ENCODE measurements at regions of chr10 and their contacts with region 1.

Region 1: DNA sequence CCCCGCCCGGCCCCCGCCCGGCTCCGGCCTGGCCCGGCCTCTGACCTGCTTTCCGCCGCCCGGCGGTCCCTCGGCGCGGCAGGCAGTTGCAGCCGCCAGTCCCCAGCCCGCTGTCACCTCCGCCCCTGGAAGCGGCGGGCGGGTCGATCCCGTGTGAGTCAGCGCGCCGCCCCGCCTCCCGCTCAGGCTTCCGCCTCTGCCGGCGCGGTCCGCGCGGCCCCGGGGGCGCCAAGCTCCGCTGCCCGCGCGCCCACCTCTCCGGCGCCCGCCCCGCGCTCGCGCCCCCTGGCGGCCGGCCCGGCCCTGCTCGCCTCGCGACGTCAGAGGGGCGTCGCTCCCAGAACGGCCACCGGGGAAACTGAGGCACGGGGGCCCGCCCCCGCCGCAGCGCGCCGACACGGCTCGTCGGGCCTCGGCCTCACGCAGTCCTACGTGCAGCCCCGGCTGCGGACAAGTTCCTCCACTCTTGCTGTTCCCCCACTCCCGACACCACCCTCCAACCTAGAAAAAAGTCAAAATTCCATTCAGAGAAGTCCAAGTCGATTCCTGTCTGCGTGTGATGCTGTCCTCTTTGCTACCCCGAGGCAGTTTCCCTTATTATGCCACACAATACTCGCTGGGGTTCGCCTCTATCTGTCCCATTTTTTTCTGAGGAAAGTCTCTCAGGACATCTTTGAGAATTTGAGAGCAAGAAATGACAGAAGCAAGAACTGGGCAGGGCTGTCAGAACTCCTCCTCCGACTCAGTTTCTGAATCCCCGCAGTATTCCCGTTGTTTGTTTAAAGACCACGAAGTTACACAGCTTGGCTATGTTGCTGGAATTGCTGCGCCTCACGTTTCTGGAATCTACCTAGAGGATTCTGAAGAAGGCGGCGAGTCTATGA is at the start of gene DNMBP:
- DNase-seq: no peak
- ATAC-seq: peak; percentile 69
- H3K4me3 ChIP-seq: peak within 1 kb of the TSS; percentile 97
- H3K27ac ChIP-seq: peak within 1 kb of the TSS; percentile 78
- H3K4me1 ChIP-seq: peaks cover 22% of the 10 kb centered on the region
- H3K27me3 ChIP-seq: no peaks in the 10 kb centered on the region
- CTCF ChIP-seq: peak; percentile 40 to 58 (median 53); a peak in 5 of 6 replicates
- EP300 ChIP-seq: no peak
- POLR2A ChIP-seq: peak; percentile 89
- RAD21 ChIP-seq: peak; percentile 65
- polyA plus RNA-seq, gene DNMBP: 7.1 to 9.8 TPM

Region 2: GRCh38 chr10:99976886-99977665 is 33.0 kb before region 1 on chr10:
- CTCF ChIA-PET with region 1: interaction called, 318 read pairs
- POLR2A ChIA-PET with region 1: interaction called, 124 read pairs
- RAD21 ChIA-PET with region 1: interaction called, 255 read pairs
- SMC1A ChIA-PET with region 1: interaction called, 531 read pairs
- in situ Hi-C with region 1: no loop called
- intact Hi-C with region 1: loop called (anchors 1 kb)
- DNase-seq: no peak
- ATAC-seq: no peak; the same call in 1 of the 3 replicates
- H3K4me3 ChIP-seq: no peak overlapping the region
- H3K27ac ChIP-seq: peak overlapping the region; percentile 94
- H3K4me1 ChIP-seq: peaks cover 70% of the 10 kb centered on the region
- H3K27me3 ChIP-seq: no peaks in the 10 kb centered on the region
- CTCF ChIP-seq: no peak
- EP300 ChIP-seq: no peak
- POLR2A ChIP-seq: no peak
- RAD21 ChIP-seq: no peak

Region 3: GRCh38 chr10:99983280-99983988 is 26.6 kb before region 1 on chr10:
- CTCF ChIA-PET with region 1: interaction called, 318 read pairs
- POLR2A ChIA-PET with region 1: interaction called, 124 read pairs
- RAD21 ChIA-PET with region 1: interaction called, 255 read pairs
- SMC1A ChIA-PET with region 1: interaction called, 531 read pairs
- in situ Hi-C with region 1: no loop called
- intact Hi-C with region 1: no loop called
- DNase-seq: peak; percentile 48
- ATAC-seq: peak; percentile 86
- H3K4me3 ChIP-seq: peak overlapping the region; percentile 57; the same call in 1 of the 2 replicates
- H3K27ac ChIP-seq: peak overlapping the region; percentile 90
- H3K4me1 ChIP-seq: peaks cover 63% of the 10 kb centered on the region
- H3K27me3 ChIP-seq: no peaks in the 10 kb centered on the region
- CTCF ChIP-seq: no peak
- EP300 ChIP-seq: no peak
- POLR2A ChIP-seq: 0 out of 2 replicates have a peak, but pooled peaks have one; percentile 25
- RAD21 ChIP-seq: no peak

Region 4: DNA sequence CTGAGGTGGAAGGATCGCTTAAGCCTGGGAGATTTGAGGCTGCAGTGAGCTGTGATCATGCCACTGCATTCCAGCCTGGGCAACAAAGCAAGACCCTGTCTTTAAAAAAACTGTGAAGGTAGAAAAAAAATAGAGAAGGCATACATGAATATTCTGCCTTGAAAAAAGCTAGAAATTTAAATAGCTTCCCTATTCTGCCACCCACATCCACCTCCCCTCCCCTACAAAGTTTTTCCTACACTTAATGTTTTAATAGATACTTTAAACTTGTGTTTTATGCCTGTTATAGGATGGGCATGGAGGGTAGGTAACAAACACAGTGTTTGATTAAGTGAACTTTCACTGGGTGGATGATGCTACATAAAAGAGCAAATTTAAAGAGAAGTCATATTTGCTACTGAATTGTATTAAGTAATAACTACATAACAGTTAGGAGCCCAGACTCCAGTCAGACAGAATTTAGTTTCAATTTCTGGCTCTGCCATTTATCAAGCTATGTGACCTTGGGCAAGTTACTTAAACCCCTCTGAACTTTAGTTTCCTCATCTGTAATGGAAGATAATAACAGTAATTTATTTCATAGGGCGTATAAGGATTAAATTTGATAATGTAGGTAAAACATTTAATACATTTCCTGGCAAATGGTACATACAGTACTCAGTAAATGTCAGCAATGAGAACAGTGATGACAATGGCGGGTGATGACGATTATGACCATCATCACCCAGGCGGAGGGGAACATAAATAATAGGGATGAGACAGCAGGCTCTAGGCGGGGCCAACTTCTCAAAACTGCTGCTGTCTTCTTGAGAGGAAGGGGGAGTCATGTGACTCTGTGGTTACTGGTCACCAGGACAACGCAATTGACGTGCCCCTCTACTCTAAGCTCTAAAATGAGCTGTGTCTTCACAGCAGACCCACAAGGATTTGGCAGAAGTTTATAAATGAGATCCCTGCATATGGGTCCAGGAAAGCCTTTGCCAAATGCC is 16.0 kb before region 1 on chr10:
- CTCF ChIA-PET with region 1: interaction called, 318 read pairs
- POLR2A ChIA-PET with region 1: interaction called, 88 read pairs
- RAD21 ChIA-PET with region 1: interaction called, 49 read pairs
- SMC1A ChIA-PET with region 1: interaction called, 531 read pairs
- in situ Hi-C with region 1: no loop called
- intact Hi-C with region 1: no loop called
- DNase-seq: peak; percentile 51
- ATAC-seq: peak; percentile 98
- H3K4me3 ChIP-seq: peak overlapping the region; percentile 4; the same call in 1 of the 2 replicates
- H3K27ac ChIP-seq: peak overlapping the region; percentile 42
- H3K4me1 ChIP-seq: peaks cover 23% of the 10 kb centered on the region
- H3K27me3 ChIP-seq: no peaks in the 10 kb centered on the region
- CTCF ChIP-seq: no peak
- EP300 ChIP-seq: no peak
- POLR2A ChIP-seq: 0 out of 2 replicates have a peak, but pooled peaks have one; percentile 24
- RAD21 ChIP-seq: no peak

Region 5: GRCh38 chr10:99999319-100000108 is 10.5 kb before region 1 on chr10:
- CTCF ChIA-PET with region 1: interaction called, 116 read pairs
- POLR2A ChIA-PET with region 1: interaction called, 88 read pairs
- RAD21 ChIA-PET with region 1: interaction called, 49 read pairs
- SMC1A ChIA-PET with region 1: interaction called, 92 read pairs
- in situ Hi-C with region 1: no loop called
- intact Hi-C with region 1: no loop called
- DNase-seq: no peak
- ATAC-seq: no peak
- H3K4me3 ChIP-seq: no peak overlapping the region
- H3K27ac ChIP-seq: no peak overlapping the region
- H3K4me1 ChIP-seq: peaks cover 31% of the 10 kb centered on the region
- H3K27me3 ChIP-seq: no peaks in the 10 kb centered on the region
- CTCF ChIP-seq: no peak
- EP300 ChIP-seq: no peak
- POLR2A ChIP-seq: no peak
- RAD21 ChIP-seq: no peak

Region 6: GRCh38 chr10:100020142-100020885 is 10.3 kb after region 1 on chr10:
- CTCF ChIA-PET with region 1: interaction called, 18 read pairs
- POLR2A ChIA-PET with region 1: interaction called, 6 read pairs
- RAD21 ChIA-PET with region 1: interaction called, 11 read pairs
- SMC1A ChIA-PET with region 1: interaction called, 20 read pairs
- in situ Hi-C with region 1: no loop called
- intact Hi-C with region 1: no loop called
- DNase-seq: peak; percentile 87
- ATAC-seq: peak; percentile 92
- H3K4me3 ChIP-seq: peak overlapping the region; percentile 41; the same call in 1 of the 2 replicates
- H3K27ac ChIP-seq: peak overlapping the region; percentile 94
- H3K4me1 ChIP-seq: peaks cover 29% of the 10 kb centered on the region
- H3K27me3 ChIP-seq: no peaks in the 10 kb centered on the region
- CTCF ChIP-seq: peak in 2 of 3 experiments; percentile 28 to 44; a peak in 3 of 6 replicates
- EP300 ChIP-seq: peak in 1 of 2 experiments; percentile 31; a peak in 1 of 4 replicates
- POLR2A ChIP-seq: no peak
- RAD21 ChIP-seq: peak; percentile 56

Region 7: DNA sequence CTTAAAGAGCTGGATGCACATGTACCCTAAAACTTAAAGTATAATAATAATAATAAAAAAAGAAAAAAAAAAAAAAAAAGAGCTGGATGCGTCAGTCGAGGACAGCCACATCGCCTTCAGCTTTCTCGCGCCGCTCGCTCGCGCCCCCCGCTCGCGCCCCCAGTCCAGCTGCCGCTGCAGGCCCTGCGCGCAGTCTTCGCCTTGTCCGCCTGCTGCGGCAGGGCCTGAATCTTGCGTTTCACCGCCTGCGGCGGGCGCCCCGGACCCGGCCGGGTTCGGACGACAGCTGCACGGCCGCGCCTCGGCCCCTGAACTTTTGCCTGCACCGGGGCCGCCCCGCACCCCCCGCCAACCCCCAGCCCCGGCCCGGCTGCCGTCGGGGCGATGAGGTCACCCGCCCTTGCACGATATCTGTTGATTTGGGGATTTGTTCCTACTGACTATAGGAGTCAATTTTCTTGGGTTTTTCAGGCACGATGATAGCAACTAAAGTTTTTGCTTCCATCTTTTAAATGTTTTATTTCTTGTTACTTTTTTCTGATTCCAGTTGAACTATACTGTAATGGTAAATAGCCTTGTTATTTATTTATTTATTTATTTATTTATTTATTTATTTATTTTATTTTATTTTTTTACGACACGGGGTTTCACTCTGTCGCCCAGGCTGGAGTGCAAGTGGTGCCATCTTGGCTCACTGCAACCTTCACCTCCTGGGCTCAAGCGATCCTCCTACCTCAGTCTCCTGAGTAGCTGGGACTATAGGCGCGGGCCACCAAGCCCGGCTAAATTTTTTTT is 105.1 kb after region 1 on chr10:
- CTCF ChIA-PET with region 1: no interaction called
- POLR2A ChIA-PET with region 1: no interaction called
- RAD21 ChIA-PET with region 1: no interaction called
- SMC1A ChIA-PET with region 1: no interaction called
- in situ Hi-C with region 1: no loop called
- intact Hi-C with region 1: no loop called
- DNase-seq: no peak
- ATAC-seq: no peak
- H3K4me3 ChIP-seq: no peak overlapping the region
- H3K27ac ChIP-seq: no peak overlapping the region
- H3K4me1 ChIP-seq: no peaks in the 10 kb centered on the region
- H3K27me3 ChIP-seq: no peaks in the 10 kb centered on the region
- CTCF ChIP-seq: no peak
- EP300 ChIP-seq: no peak
- POLR2A ChIP-seq: no peak
- RAD21 ChIP-seq: no peak

Measured in GM12878 (cell line).